ENCODE measurements at regions of chr10 and their contacts with region 1.

Region 1: DNA sequence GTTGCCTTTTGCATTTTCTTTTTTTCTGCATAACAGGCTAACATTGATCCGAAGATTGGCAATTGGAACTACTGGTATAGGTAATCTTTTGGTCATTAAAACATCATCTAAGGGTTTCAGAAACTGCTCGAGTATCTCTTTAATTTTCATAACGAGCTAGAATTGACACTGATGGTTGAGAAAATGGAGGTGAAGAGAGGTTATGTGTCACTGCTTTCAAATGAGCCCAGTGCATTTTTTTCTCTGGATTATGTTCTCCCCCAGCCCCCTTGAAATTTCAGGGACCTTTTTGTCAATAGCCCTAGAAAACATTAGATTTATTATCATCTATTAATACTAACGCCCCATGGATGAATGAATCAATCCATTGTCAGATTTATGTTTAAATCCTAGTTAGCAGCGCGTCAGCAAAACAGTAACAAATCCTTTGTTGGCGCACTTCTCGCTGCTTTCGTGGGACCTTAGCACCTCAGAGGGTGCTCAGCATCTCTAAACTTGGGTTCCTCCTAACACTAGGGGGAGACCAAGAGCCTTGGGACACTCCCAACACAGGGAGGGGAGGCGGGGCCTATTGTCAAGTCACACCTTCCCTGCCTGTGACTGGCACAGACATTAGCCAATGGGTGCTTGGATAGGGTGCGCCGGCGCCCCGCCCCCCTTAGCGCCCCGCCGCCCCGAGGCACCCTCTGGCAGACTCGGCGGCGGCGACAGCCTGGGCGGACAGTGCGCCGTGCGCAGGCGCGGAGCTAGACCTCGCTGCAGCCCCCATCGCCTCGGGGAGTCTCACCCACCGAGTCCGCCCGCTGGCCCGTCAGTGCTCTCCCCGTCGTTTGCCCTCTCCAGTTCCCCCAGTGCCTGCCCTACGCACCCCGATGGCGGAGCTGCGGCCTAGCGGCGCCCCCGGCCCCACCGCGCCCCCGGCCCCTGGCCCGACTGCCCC is at the start of gene SUFU:
- DNase-seq: peak; percentile 91 to 99 (median 98)
- ATAC-seq: peak; percentile 85
- H3K4me3 ChIP-seq: peak within 1 kb of the TSS; percentile 92
- H3K4me3 Mint-ChIP-seq: no peak within 1 kb of the TSS
- H3K27ac ChIP-seq: peak within 1 kb of the TSS; percentile 88
- H3K27ac Mint-ChIP-seq: peak within 1 kb of the TSS in 7 of 9 donors; percentile 78 to 95 (median 83)
- H3K4me1 ChIP-seq: peaks cover 19 to 29% of the 10 kb centered on the region in 2 donors
- H3K4me1 Mint-ChIP-seq: peaks cover 22 to 49% (median 41%) of the 10 kb centered on the region in 7 donors
- H3K27me3 ChIP-seq: no peaks in the 10 kb centered on the region
- H3K27me3 Mint-ChIP-seq: no peaks in the 10 kb centered on the region
- total RNA-seq, gene SUFU: 10.7 to 17.5 (median 16.1) TPM

Region 2: DNA sequence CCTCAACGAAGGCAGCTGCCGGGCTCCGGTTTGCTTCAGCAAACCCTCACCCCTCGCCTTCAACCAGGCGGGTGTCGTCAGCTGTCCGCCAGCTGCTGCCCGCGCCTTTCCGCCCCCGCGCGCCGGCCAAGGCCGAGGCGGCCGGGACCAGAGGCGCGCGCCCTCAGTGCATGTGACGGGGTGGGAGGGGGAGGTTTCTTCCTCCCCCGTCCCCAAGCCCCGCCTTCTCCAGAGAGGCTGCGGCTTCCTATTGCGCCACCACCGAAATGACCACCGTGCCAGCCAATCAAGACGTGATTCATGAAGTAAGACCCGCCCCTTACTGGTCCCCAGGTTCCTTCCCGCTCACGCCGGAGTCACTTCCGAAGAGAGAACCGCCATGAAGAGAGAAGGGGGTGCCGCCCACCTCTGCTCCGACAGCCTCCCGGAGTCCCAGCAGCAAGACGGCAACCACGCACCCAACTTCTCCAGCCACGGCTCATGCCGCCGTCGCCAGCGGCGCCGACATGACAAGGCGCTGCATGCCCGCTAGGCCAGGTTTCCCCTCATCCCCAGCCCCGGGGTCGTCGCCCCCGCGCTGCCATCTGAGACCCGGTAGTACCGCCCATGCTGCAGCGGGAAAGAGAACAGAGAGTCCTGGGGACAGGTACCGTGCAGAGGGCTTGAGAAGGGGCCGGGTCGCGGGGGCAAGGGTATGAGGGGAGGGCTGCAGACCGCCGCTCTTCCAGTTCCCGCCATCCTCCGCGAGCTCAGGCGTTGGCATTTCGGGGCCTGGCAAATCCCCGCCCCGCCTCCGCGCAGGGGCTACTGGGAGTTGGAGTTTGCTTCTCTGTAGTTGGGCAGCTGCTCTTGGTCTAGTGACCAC is 1590.7 kb before region 1 on chr10 and contains the start of gene SLF2:
- CTCF ChIA-PET with region 1: no interaction called
- POLR2A ChIA-PET with region 1: no interaction called
- intact Hi-C with region 1: loop called in 1 of 2 experiments (anchors 5 kb)
- DNase-seq: peak; percentile 69 to 91 (median 88)
- ATAC-seq: peak; percentile 96
- H3K4me3 ChIP-seq: peak within 1 kb of the TSS; percentile 96
- H3K4me3 Mint-ChIP-seq: peak within 1 kb of the TSS; percentile 91 to 100 (median 99)
- H3K27ac ChIP-seq: peak within 1 kb of the TSS; percentile 89
- H3K27ac Mint-ChIP-seq: peak within 1 kb of the TSS; percentile 88 to 99 (median 97)
- H3K4me1 ChIP-seq: peaks cover 12 to 13% of the 10 kb centered on the region in 2 donors
- H3K4me1 Mint-ChIP-seq: peaks cover 22 to 63% (median 60%) of the 10 kb centered on the region in 7 donors
- H3K27me3 ChIP-seq: no peaks in the 10 kb centered on the region
- H3K27me3 Mint-ChIP-seq: no peaks in the 10 kb centered on the region
- total RNA-seq, gene SLF2: 20.1 to 43.7 (median 38.8) TPM

Region 3: GRCh38 chr10:102055647-102056419 is 447.7 kb before region 1 on chr10 and contains the start of gene ARMH3:
- CTCF ChIA-PET with region 1: no interaction called
- POLR2A ChIA-PET with region 1: no interaction called
- intact Hi-C with region 1: loop called (anchors 1 kb)
- DNase-seq: peak; percentile 72 to 90 (median 87)
- ATAC-seq: peak; percentile 98
- H3K4me3 ChIP-seq: peak within 1 kb of the TSS; percentile 92
- H3K4me3 Mint-ChIP-seq: peak within 1 kb of the TSS; percentile 89 to 98 (median 94)
- H3K27ac ChIP-seq: peak within 1 kb of the TSS; percentile 87
- H3K27ac Mint-ChIP-seq: peak within 1 kb of the TSS; percentile 76 to 97 (median 92)
- H3K4me1 ChIP-seq: peaks cover 18 to 20% of the 10 kb centered on the region in 2 donors
- H3K4me1 Mint-ChIP-seq: peaks cover 25 to 50% (median 42%) of the 10 kb centered on the region in 7 donors
- H3K27me3 ChIP-seq: no peaks in the 10 kb centered on the region
- H3K27me3 Mint-ChIP-seq: no peaks in the 10 kb centered on the region
- total RNA-seq, gene ARMH3: 26.7 to 34.0 (median 28.8) TPM

Region 4: GRCh38 chr10:102245101-102245931 is 258.2 kb before region 1 on chr10 and contains the start of gene GBF1:
- CTCF ChIA-PET with region 1: no interaction called
- POLR2A ChIA-PET with region 1: interaction called, 4 read pairs
- intact Hi-C with region 1: loop called (anchors 1 kb)
- DNase-seq: peak; percentile 69 to 97 (median 96)
- ATAC-seq: peak; percentile 92
- H3K4me3 ChIP-seq: peak within 1 kb of the TSS; percentile 84
- H3K4me3 Mint-ChIP-seq: peak within 1 kb of the TSS; percentile 83 to 100 (median 97)
- H3K27ac ChIP-seq: peak within 1 kb of the TSS; percentile 90
- H3K27ac Mint-ChIP-seq: peak within 1 kb of the TSS; percentile 65 to 98 (median 95)
- H3K4me1 ChIP-seq: peaks cover 17 to 37% of the 10 kb centered on the region in 2 donors
- H3K4me1 Mint-ChIP-seq: peaks cover 43 to 69% (median 54%) of the 10 kb centered on the region in 7 donors
- H3K27me3 ChIP-seq: peaks cover 0 to 16% of the 10 kb centered on the region in 2 donors
- H3K27me3 Mint-ChIP-seq: peaks cover 14 to 27% (median 22%) of the 10 kb centered on the region in 5 donors
- total RNA-seq, gene GBF1: 36.2 to 47.2 (median 37.8) TPM

Region 5: DNA sequence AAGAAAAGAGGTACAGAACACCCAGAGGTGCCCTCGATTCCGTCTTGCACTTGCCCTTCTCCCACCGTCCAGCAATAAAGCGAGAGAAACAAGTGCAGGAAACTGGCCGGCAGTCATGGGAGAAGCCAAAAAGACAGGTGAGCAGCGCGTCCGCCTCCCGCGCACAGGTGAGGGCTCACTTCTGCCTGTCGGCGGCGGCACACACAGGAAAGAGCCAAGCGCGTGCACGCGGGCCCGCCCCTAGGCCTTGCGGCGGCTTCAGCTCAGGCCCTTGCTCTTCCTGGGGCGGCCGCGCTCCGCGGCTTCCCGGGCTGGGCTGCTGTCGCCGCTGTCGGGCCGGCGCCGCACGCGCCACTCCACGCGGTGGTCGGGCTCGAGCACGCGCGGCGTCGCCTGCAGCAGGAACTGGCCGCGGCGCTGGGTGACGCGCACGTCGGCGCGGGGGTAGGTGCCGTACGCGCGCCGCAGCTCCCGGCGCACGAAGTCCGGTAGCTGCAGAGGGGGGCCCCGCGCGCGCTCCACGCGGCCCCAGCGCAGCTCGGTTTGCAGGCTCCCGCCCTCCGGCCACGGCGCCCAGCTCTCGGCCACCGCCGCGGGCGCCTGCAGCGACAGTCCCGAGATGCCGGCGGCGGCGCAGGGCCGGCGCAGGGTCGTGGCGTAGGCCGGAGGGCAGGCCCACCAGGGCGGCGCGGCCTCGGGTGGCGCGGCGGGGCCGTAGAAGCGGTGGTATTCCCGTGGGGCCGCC is 53.2 kb before region 1 on chr10:
- CTCF ChIA-PET with region 1: no interaction called
- POLR2A ChIA-PET with region 1: interaction called, 18 read pairs
- intact Hi-C with region 1: loop called (anchors 1 kb)
- DNase-seq: peak; percentile 85 to 95 (median 92)
- ATAC-seq: peak; percentile 90
- H3K4me3 ChIP-seq: peak overlapping the region; percentile 88
- H3K4me3 Mint-ChIP-seq: peak overlapping the region; percentile 89 to 97 (median 94)
- H3K27ac ChIP-seq: peak overlapping the region; percentile 90
- H3K27ac Mint-ChIP-seq: peak overlapping the region; percentile 81 to 97 (median 95)
- H3K4me1 ChIP-seq: peaks cover 12 to 14% of the 10 kb centered on the region in 2 donors
- H3K4me1 Mint-ChIP-seq: peaks cover 14 to 37% (median 27%) of the 10 kb centered on the region in 7 donors
- H3K27me3 ChIP-seq: no peaks in the 10 kb centered on the region
- H3K27me3 Mint-ChIP-seq: no peaks in the 10 kb centered on the region

Region 6: DNA sequence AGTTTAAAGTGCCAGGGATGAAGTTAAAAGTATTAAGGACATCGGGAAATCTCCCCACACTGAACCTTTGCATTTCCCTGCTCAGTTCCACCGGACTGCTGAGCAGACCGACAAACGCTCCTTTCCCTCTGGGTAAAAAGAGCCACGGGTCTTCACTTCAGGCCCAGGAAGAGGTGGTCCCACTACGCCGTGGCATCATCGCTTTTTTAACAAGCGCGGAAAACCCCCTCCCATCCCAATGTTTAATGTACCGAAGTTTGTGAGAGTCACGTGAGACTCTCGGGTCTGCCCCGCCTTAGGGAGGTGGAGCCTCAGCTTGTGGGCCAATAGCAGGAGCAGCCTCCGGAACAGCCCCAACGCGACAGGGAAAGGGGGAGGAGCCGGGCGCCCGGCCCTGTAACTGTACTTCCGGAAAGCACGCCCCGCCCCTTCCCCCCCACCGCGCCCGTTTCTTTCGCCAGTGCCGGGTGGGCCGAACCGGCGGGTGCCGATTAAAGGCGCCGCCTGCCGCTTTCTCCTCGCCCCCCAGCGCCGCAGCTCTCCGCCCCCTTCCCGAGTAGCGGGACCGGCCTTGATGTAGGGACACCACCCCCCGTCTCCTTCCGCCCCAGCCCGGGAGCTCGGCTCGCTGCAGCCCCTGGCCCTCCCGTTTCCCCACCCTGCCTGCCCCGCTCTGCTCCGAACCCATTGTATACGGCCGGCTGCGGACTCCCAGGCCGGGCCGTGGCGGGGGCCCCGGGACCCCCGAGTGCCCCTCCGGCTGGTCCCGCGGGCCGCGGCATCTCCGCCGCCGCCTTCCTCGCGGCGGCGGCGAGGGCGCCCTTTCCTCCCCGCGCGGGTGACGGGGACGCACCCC is 138.6 kb after region 1 on chr10:
- CTCF ChIA-PET with region 1: interaction called, 3 read pairs
- POLR2A ChIA-PET with region 1: interaction called, 7 read pairs
- intact Hi-C with region 1: loop called (anchors 1 kb)
- DNase-seq: peak; percentile 85 to 99 (median 93)
- ATAC-seq: peak; percentile 84
- H3K4me3 ChIP-seq: peak overlapping the region; percentile 85
- H3K4me3 Mint-ChIP-seq: peak overlapping the region; percentile 90 to 97 (median 93)
- H3K27ac ChIP-seq: peak overlapping the region; percentile 98
- H3K27ac Mint-ChIP-seq: peak overlapping the region; percentile 84 to 98 (median 95)
- H3K4me1 ChIP-seq: peaks cover 8 to 13% of the 10 kb centered on the region in 2 donors
- H3K4me1 Mint-ChIP-seq: peaks cover 13 to 29% (median 19%) of the 10 kb centered on the region in 7 donors
- H3K27me3 ChIP-seq: no peaks in the 10 kb centered on the region
- H3K27me3 Mint-ChIP-seq: peaks cover 0 to 6% (median 0%) of the 10 kb centered on the region in 5 donors

Region 7: DNA sequence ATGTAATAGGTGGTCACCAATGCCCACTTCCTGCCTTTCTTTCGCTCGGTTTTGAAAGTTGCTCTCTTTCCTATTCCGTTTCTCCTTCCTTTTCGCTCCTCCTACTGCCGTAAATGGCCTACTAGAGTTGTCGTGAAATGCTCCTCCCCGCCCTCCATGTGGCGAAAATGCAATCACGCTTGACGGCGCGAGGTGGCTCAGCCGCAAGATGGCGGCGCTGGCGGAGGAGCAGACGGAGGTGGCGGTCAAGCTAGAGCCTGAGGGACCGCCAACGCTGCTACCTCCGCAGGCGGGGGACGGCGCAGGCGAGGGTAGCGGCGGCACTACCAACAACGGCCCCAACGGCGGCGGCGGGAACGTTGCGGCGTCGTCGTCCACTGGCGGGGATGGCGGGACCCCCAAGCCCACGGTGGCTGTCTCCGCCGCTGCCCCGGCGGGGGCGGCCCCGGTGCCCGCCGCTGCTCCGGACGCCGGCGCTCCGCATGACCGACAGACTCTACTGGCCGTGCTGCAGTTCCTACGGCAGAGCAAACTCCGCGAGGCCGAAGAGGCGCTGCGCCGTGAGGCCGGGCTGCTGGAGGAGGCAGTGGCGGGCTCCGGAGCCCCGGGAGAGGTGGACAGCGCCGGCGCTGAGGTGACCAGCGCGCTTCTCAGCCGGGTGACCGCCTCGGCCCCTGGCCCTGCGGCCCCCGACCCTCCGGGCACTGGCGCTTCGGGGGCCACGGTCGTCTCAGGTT is 864.4 kb after region 1 on chr10 and contains the start of gene TAF5:
- CTCF ChIA-PET with region 1: no interaction called
- POLR2A ChIA-PET with region 1: interaction called, 3 read pairs
- intact Hi-C with region 1: loop called (anchors 1 to 10 kb)
- DNase-seq: peak; percentile 70 to 94 (median 90)
- ATAC-seq: peak; percentile 88
- H3K4me3 ChIP-seq: peak within 1 kb of the TSS; percentile 58
- H3K4me3 Mint-ChIP-seq: peak within 1 kb of the TSS; percentile 92 to 99 (median 96)
- H3K27ac ChIP-seq: peak within 1 kb of the TSS; percentile 77
- H3K27ac Mint-ChIP-seq: peak within 1 kb of the TSS; percentile 84 to 98 (median 94)
- H3K4me1 ChIP-seq: peaks cover 4 to 11% of the 10 kb centered on the region in 2 donors
- H3K4me1 Mint-ChIP-seq: peaks cover 0 to 35% (median 23%) of the 10 kb centered on the region in 7 donors
- H3K27me3 ChIP-seq: no peaks in the 10 kb centered on the region
- H3K27me3 Mint-ChIP-seq: no peaks in the 10 kb centered on the region
- total RNA-seq, gene TAF5: 4.7 to 8.9 (median 7.1) TPM

Region 8: GRCh38 chr10:104045151-104046089 is 1541.9 kb after region 1 on chr10:
- CTCF ChIA-PET with region 1: no interaction called
- POLR2A ChIA-PET with region 1: no interaction called
- intact Hi-C with region 1: no loop called
- DNase-seq: no peak
- ATAC-seq: no peak
- H3K4me3 ChIP-seq: no peak overlapping the region
- H3K4me3 Mint-ChIP-seq: no peak overlapping the region
- H3K27ac ChIP-seq: no peak overlapping the region
- H3K27ac Mint-ChIP-seq: no peak overlapping the region
- H3K4me1 ChIP-seq: no peaks in the 10 kb centered on the region
- H3K4me1 Mint-ChIP-seq: peaks cover 0 to 3% (median 0%) of the 10 kb centered on the region in 7 donors
- H3K27me3 ChIP-seq: no peaks in the 10 kb centered on the region
- H3K27me3 Mint-ChIP-seq: no peaks in the 10 kb centered on the region